ENCODE measurements at regions of chr14 and their contacts with region 1.

Region 1: DNA sequence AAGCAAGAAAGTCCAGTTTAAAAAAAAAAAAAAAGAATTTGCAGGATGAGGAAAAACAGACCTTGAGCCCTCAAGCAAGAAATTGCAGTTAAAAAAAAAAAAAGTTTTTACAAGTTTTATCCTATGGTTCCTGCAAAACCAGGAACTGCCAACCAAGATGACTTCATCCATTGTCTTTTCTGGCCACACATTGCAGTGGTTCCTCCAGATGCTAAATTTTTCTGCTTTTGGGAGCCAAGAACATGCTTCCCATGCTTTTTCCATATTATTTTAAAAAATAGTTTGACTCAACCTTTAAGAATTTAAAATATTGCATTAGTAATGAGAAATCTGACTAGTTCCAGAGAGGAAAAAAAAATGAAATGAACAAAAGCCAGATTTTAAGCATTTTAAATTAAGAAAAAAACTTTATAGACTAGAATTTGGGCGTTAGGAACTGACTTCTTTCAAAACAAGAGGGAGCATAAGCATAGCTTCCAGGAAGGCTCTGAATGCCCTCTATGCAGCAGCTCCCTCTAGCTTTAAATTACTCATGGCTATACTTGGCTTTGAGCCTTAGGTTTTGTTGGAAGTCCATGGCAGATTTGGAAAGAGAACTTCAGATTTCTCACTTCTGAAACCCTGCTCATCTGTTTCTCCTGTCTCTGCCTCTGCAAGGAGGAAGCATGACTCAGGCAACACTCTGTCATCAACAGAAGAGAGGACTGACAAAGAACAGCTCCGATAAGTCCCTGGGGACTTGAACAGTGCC is 124.5 kb downstream of the GPR65 start:
- DNase-seq: peak in 1 of 9 donors; percentile 6
- ATAC-seq: peak; percentile 78
- H3K4me3 ChIP-seq: no peak overlapping the region
- H3K4me3 Mint-ChIP-seq: peak overlapping the region in 3 of 10 donors; percentile 20 to 49 (median 48)
- H3K27ac ChIP-seq: no peak overlapping the region
- H3K27ac Mint-ChIP-seq: peak overlapping the region in 2 of 9 donors; percentile 28 to 47
- H3K4me1 ChIP-seq: peaks cover 0 to 10% of the 10 kb centered on the region in 2 donors
- H3K4me1 Mint-ChIP-seq: peaks cover 0 to 26% (median 15%) of the 10 kb centered on the region in 7 donors
- H3K27me3 ChIP-seq: no peaks in the 10 kb centered on the region
- H3K27me3 Mint-ChIP-seq: peaks cover 0 to 7% (median 4%) of the 10 kb centered on the region in 5 donors

Region 2: DNA sequence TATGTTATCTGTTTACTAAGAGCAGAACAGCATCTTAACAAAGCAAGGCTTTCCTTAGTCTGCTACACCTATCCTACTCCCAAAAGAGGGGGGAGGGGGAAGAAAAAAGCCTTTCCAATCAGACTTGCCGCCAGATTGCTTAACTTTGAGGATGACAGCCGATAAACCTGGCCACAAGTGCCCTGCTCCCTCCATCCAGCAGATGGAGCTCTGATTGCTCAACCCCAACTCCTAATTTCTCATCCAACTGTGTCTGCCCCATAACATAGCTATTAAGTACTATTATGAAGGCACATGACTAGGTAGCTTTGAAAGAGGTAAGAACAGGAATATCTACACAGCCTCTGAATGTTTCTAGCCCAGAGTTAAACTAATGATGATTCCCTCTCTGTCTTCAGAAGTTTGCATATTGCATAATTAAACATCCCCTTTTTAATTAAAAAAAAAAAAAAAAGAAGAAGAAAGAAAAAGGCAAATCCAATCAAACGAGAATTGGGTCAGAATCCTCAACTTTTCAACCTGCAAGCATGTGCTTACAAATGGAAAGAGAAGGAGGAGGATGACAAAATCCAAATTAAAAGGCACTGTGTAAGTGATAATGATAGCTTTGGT is 383.9 kb before region 1 on chr14:
- CTCF ChIA-PET with region 1: no interaction called
- POLR2A ChIA-PET with region 1: no interaction called
- intact Hi-C with region 1: loop called in 1 of 2 experiments (anchors 5 kb)
- DNase-seq: no peak
- ATAC-seq: no peak
- H3K4me3 ChIP-seq: no peak overlapping the region
- H3K4me3 Mint-ChIP-seq: no peak overlapping the region
- H3K27ac ChIP-seq: no peak overlapping the region
- H3K27ac Mint-ChIP-seq: no peak overlapping the region
- H3K4me1 ChIP-seq: no peaks in the 10 kb centered on the region
- H3K4me1 Mint-ChIP-seq: peaks cover 0 to 1% (median 0%) of the 10 kb centered on the region in 7 donors
- H3K27me3 ChIP-seq: no peaks in the 10 kb centered on the region
- H3K27me3 Mint-ChIP-seq: peaks cover 0 to 9% (median 6%) of the 10 kb centered on the region in 5 donors

Measured in naive thymus-derived CD4-positive, alpha-beta T cell (primary cell).